ENCODE measurements at regions of chr19 and their contacts with region 1.

Region 1: GRCh38 chr19:18542936-18543815 is at the start of gene FKBP8:
- DNase-seq: no peak
- ATAC-seq: peak; percentile 99
- H3K4me3 ChIP-seq: peak within 1 kb of the TSS; percentile 82
- H3K27ac ChIP-seq: peak within 1 kb of the TSS; percentile 78
- H3K4me1 ChIP-seq: peaks cover 10% of the 10 kb centered on the region
- H3K27me3 ChIP-seq: no peaks in the 10 kb centered on the region
- CTCF ChIP-seq: no peak
- EP300 ChIP-seq: no peak
- POLR2A ChIP-seq: no peak
- RAD21 ChIP-seq: no peak
- polyA plus RNA-seq, gene FKBP8: 0.13 to 1.1 TPM

Region 2: GRCh38 chr19:18557474-18558201 is 14.5 kb after region 1 on chr19 and contains the start of gene KXD1:
- CTCF ChIA-PET with region 1: interaction called, 35 read pairs
- POLR2A ChIA-PET with region 1: interaction called, 79 read pairs
- RAD21 ChIA-PET with region 1: interaction called, 39 read pairs
- SMC1A ChIA-PET with region 1: interaction called, 29 read pairs
- in situ Hi-C with region 1: no loop called
- intact Hi-C with region 1: no loop called
- DNase-seq: peak; percentile 98
- ATAC-seq: peak; percentile 97
- H3K4me3 ChIP-seq: peak within 1 kb of the TSS; percentile 95
- H3K27ac ChIP-seq: peak within 1 kb of the TSS; percentile 85
- H3K4me1 ChIP-seq: no peaks in the 10 kb centered on the region
- H3K27me3 ChIP-seq: no peaks in the 10 kb centered on the region
- CTCF ChIP-seq: no peak
- EP300 ChIP-seq: no peak
- POLR2A ChIP-seq: peak; percentile 92
- RAD21 ChIP-seq: no peak
- polyA plus RNA-seq, gene KXD1: 27.5 to 44.9 TPM

Region 3: GRCh38 chr19:18571564-18572300 is 28.6 kb after region 1 on chr19 and contains the start of gene UBA52:
- CTCF ChIA-PET with region 1: interaction called, 3 read pairs
- POLR2A ChIA-PET with region 1: interaction called, 8 read pairs
- RAD21 ChIA-PET with region 1: interaction called, 16 read pairs
- SMC1A ChIA-PET with region 1: interaction called, 8 read pairs
- in situ Hi-C with region 1: no loop called
- intact Hi-C with region 1: loop called (anchors 1 kb)
- DNase-seq: peak; percentile 92
- ATAC-seq: peak; percentile 98
- H3K4me3 ChIP-seq: peak within 1 kb of the TSS; percentile 95
- H3K27ac ChIP-seq: peak within 1 kb of the TSS; percentile 76
- H3K4me1 ChIP-seq: peaks cover 11% of the 10 kb centered on the region; the same call in 1 of the 2 replicates
- H3K27me3 ChIP-seq: no peaks in the 10 kb centered on the region
- CTCF ChIP-seq: no peak
- EP300 ChIP-seq: 0 out of 4 replicates have a peak, but pooled peaks of 1 of the 2 experiments have one; percentile 17
- POLR2A ChIP-seq: peak; percentile 99
- RAD21 ChIP-seq: no peak
- polyA plus RNA-seq, gene UBA52: 2,192 to 2,288 TPM

Region 4: DNA sequence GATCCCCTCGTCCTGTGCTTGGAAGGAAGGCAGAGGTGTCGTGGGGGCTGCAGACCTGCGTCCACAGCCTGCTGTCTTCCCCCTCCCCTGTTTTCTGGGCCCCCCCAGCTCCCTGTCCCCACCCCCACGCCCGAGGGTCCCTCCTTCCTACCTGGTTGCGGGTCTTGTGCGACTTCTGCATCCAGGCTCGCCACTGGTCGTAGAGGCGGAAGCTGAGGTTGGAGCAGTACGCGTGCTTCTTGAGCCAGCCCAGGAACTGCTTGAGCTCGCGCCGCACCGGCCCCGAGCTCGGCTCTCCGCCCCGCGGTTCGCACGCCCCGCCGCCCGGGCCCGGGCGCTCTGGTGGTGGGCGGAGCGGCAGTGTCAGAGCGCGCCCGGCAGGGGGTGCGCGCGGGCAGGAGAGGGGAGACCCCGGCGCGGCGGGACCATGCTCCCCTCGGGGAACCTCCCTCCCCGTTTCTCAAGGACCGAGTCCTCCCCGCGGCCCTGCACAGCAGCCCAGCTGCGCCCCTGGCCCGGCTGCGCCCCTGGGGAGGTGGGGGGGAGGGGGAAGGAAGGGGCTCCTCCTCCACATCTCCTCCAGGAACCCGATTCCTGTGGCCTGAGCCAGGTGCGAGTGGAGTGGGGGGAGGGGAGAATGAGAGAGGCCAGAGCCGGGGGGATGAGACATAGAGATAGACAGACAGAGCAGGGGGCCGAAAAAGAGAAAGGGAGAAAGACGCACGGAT is 51.1 kb after region 1 on chr19:
- CTCF ChIA-PET with region 1: interaction called, 22 read pairs
- POLR2A ChIA-PET with region 1: interaction called, 27 read pairs
- RAD21 ChIA-PET with region 1: interaction called, 20 read pairs
- SMC1A ChIA-PET with region 1: no interaction called
- in situ Hi-C with region 1: no loop called
- intact Hi-C with region 1: loop called (anchors 5 kb)
- DNase-seq: no peak
- ATAC-seq: peak; percentile 81
- H3K4me3 ChIP-seq: peak overlapping the region; percentile 67
- H3K27ac ChIP-seq: no peak overlapping the region
- H3K4me1 ChIP-seq: peaks cover 15% of the 10 kb centered on the region
- H3K27me3 ChIP-seq: peaks cover 2% of the 10 kb centered on the region in 2 experiments; a peak in 1 of 4 replicates
- CTCF ChIP-seq: peak; percentile 66 to 88 (median 81)
- EP300 ChIP-seq: no peak
- POLR2A ChIP-seq: no peak; the same call in none of the 2 replicates
- RAD21 ChIP-seq: peak; percentile 74

Region 5: GRCh38 chr19:18612772-18613588 is 69.8 kb after region 1 on chr19 and contains the start of gene TMEM59L:
- CTCF ChIA-PET with region 1: no interaction called
- POLR2A ChIA-PET with region 1: no interaction called
- RAD21 ChIA-PET with region 1: no interaction called
- SMC1A ChIA-PET with region 1: no interaction called
- in situ Hi-C with region 1: no loop called
- intact Hi-C with region 1: no loop called
- DNase-seq: no peak
- ATAC-seq: no peak
- H3K4me3 ChIP-seq: no peak within 1 kb of the TSS
- H3K27ac ChIP-seq: no peak within 1 kb of the TSS
- H3K4me1 ChIP-seq: no peaks in the 10 kb centered on the region
- H3K27me3 ChIP-seq: peaks cover 19 to 27% of the 10 kb centered on the region in 2 experiments
- CTCF ChIP-seq: no peak
- EP300 ChIP-seq: no peak
- POLR2A ChIP-seq: no peak
- RAD21 ChIP-seq: no peak
- polyA plus RNA-seq, gene TMEM59L: not detected

Measured in GM12878 (cell line).